A673 (cell line): ENCODE measurements at regions of chr17 and their contacts with region 1.

Region 1: GRCh38 chr17:10875979-10876555 is 38.2 kb upstream of the PIRT start:
- DNase-seq: peak; percentile 65
- H3K4me3 ChIP-seq: no peak overlapping the region
- H3K27ac ChIP-seq: no peak overlapping the region
- H3K4me1 ChIP-seq: peaks cover 7% of the 10 kb centered on the region
- H3K27me3 ChIP-seq: no peaks in the 10 kb centered on the region
- CTCF ChIP-seq: peak; percentile 75

Region 2: GRCh38 chr17:11144358-11145233 is 268.5 kb after region 1 on chr17:
- CTCF ChIA-PET with region 1: interaction called, 14 read pairs
- POLR2A ChIA-PET with region 1: no interaction called
- intact Hi-C with region 1: loop called (anchors 1 kb)
- DNase-seq: peak; percentile 83
- H3K4me3 ChIP-seq: no peak overlapping the region
- H3K27ac ChIP-seq: no peak overlapping the region
- H3K4me1 ChIP-seq: peaks cover 9% of the 10 kb centered on the region
- H3K27me3 ChIP-seq: no peaks in the 10 kb centered on the region
- CTCF ChIP-seq: peak; percentile 88

Region 3: DNA sequence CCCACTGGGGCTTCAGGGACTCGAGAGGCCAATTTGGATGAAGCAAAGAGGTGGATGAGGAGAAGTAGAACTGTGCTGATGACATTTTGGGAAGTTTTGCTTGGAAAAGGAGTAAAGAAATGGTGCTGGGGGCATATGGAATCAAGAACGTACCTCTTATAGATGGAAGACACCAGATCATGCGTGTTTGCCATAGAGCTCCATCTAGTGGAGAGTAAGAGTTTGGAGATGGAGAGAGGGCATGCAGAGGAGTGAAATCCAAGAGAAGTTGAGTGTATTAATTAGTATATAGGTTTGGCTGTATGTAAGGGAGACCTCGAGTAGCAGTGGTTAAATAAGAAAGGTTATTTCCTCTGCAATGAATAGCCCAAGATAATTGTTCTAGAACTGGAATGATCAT is 420.9 kb after region 1 on chr17:
- CTCF ChIA-PET with region 1: no interaction called
- POLR2A ChIA-PET with region 1: no interaction called
- intact Hi-C with region 1: loop called (anchors 5 kb)
- DNase-seq: peak; percentile 70
- H3K4me3 ChIP-seq: no peak overlapping the region
- H3K27ac ChIP-seq: no peak overlapping the region
- H3K4me1 ChIP-seq: no peaks in the 10 kb centered on the region
- H3K27me3 ChIP-seq: no peaks in the 10 kb centered on the region
- CTCF ChIP-seq: peak; percentile 80

Region 4: GRCh38 chr17:11742886-11743285 is 866.8 kb after region 1 on chr17:
- CTCF ChIA-PET with region 1: interaction called, 6 read pairs
- POLR2A ChIA-PET with region 1: no interaction called
- intact Hi-C with region 1: loop called (anchors 5 kb)
- DNase-seq: peak; percentile 81
- H3K4me3 ChIP-seq: no peak overlapping the region
- H3K27ac ChIP-seq: no peak overlapping the region
- H3K4me1 ChIP-seq: peaks cover 37% of the 10 kb centered on the region
- H3K27me3 ChIP-seq: no peaks in the 10 kb centered on the region
- CTCF ChIP-seq: peak; percentile 79

Region 5: GRCh38 chr17:11935734-11936406 is 1059.8 kb after region 1 on chr17:
- CTCF ChIA-PET with region 1: interaction called, 9 read pairs
- POLR2A ChIA-PET with region 1: no interaction called
- intact Hi-C with region 1: loop called (anchors 2 kb)
- DNase-seq: peak; percentile 88
- H3K4me3 ChIP-seq: no peak overlapping the region
- H3K27ac ChIP-seq: no peak overlapping the region
- H3K4me1 ChIP-seq: no peaks in the 10 kb centered on the region
- H3K27me3 ChIP-seq: no peaks in the 10 kb centered on the region
- CTCF ChIP-seq: peak; percentile 97